ENCODE measurements at regions of chr4 and their contacts with region 1.

Region 1: GRCh38 chr4:15996773-15997172 is 33.8 kb upstream of the FGFBP2 start:
- DNase-seq: no peak
- H3K4me3 ChIP-seq: no peak overlapping the region
- H3K27ac ChIP-seq: no peak overlapping the region
- H3K4me1 ChIP-seq: peaks cover 0 to 7% (median 5%) of the 10 kb centered on the region in 4 donors
- H3K27me3 ChIP-seq: no peaks in the 10 kb centered on the region
- CTCF ChIP-seq: no peak
- EP300 ChIP-seq: no peak
- POLR2A ChIP-seq: no peak

Region 2: DNA sequence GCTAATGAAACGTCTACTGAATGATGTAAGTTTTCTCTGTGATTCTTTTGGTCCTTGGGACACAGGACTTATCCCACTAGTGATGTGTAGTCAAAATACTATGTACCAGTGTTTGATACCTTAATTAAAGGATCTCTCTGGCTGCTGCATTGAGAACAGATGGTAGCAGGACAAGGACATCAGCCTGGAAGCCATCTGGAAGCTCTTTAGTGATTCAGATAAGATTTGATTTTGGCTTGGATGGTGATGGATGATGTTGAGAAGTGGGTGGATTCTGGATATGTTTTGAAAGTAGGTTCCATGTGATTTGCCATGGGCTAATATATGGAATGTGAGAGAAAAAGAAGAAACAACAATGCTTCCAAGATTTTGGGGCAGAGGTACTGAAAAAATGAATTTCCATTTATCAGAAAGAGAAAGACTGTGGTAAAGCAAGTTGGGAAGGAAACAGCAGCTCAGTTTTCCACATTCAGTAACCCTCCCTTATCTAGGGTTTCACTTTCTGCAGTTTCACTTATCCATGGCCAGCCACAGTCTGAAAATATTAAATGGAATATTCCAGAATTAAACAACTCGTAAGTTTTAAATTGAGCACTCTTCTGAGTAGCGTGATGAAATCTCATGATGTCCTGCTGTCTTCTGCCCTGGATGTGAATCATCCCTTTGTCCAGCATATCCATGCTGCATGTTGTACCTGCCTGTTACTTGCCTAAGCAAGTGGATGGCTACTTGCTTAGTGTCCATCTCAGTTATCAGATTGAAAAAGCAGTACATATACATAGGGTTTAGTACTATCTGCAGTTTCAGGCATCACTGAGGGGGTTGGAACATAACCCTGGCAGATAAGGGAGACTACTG is 203.0 kb before region 1 on chr4:
- in situ Hi-C with region 1: no loop called
- intact Hi-C with region 1: no loop called
- DNase-seq: no peak
- H3K4me3 ChIP-seq: no peak overlapping the region
- H3K27ac ChIP-seq: no peak overlapping the region
- H3K4me1 ChIP-seq: peaks cover 0 to 3% (median under 1%) of the 10 kb centered on the region in 4 donors
- H3K27me3 ChIP-seq: no peaks in the 10 kb centered on the region
- CTCF ChIP-seq: no peak
- EP300 ChIP-seq: no peak
- POLR2A ChIP-seq: no peak

Region 3: GRCh38 chr4:15805583-15806517 is 190.9 kb before region 1 on chr4:
- in situ Hi-C with region 1: loop called in 1 of 4 experiments (anchors 10 kb)
- intact Hi-C with region 1: no loop called
- DNase-seq: no peak
- H3K4me3 ChIP-seq: no peak overlapping the region
- H3K27ac ChIP-seq: no peak overlapping the region
- H3K4me1 ChIP-seq: peaks cover 0 to 6% (median 0%) of the 10 kb centered on the region in 4 donors
- H3K27me3 ChIP-seq: no peaks in the 10 kb centered on the region
- CTCF ChIP-seq: peak; percentile 68 to 73 (median 69)
- EP300 ChIP-seq: no peak
- POLR2A ChIP-seq: no peak

Region 4: GRCh38 chr4:15882675-15883086 is 114.1 kb before region 1 on chr4:
- in situ Hi-C with region 1: no loop called
- intact Hi-C with region 1: loop called (anchors 5 kb)
- DNase-seq: peak; percentile 33
- H3K4me3 ChIP-seq: no peak overlapping the region
- H3K27ac ChIP-seq: no peak overlapping the region
- H3K4me1 ChIP-seq: peaks cover 3 to 18% (median 12%) of the 10 kb centered on the region in 4 donors
- H3K27me3 ChIP-seq: no peaks in the 10 kb centered on the region
- CTCF ChIP-seq: peak; percentile 85 to 94 (median 88)
- EP300 ChIP-seq: no peak
- POLR2A ChIP-seq: no peak

Region 5: GRCh38 chr4:16034010-16034829 is 37.4 kb after region 1 on chr4:
- in situ Hi-C with region 1: no loop called
- intact Hi-C with region 1: no loop called
- DNase-seq: no peak
- H3K4me3 ChIP-seq: no peak overlapping the region
- H3K27ac ChIP-seq: no peak overlapping the region
- H3K4me1 ChIP-seq: no peaks in the 10 kb centered on the region
- H3K27me3 ChIP-seq: no peaks in the 10 kb centered on the region
- CTCF ChIP-seq: no peak
- EP300 ChIP-seq: no peak
- POLR2A ChIP-seq: no peak

Region 6: GRCh38 chr4:16056681-16057385 is 60.1 kb after region 1 on chr4:
- in situ Hi-C with region 1: no loop called
- intact Hi-C with region 1: no loop called
- DNase-seq: no peak
- H3K4me3 ChIP-seq: no peak overlapping the region
- H3K27ac ChIP-seq: peak overlapping the region in 3 of 4 donors; percentile 28 to 64 (median 46)
- H3K4me1 ChIP-seq: peaks cover 0 to 11% (median 1%) of the 10 kb centered on the region in 4 donors
- H3K27me3 ChIP-seq: no peaks in the 10 kb centered on the region
- CTCF ChIP-seq: no peak
- EP300 ChIP-seq: no peak
- POLR2A ChIP-seq: no peak

Region 7: GRCh38 chr4:16264798-16265197 is 268.0 kb after region 1 on chr4:
- in situ Hi-C with region 1: no loop called
- intact Hi-C with region 1: no loop called
- DNase-seq: no peak
- H3K4me3 ChIP-seq: no peak overlapping the region
- H3K27ac ChIP-seq: no peak overlapping the region
- H3K4me1 ChIP-seq: no peaks in the 10 kb centered on the region
- H3K27me3 ChIP-seq: no peaks in the 10 kb centered on the region
- CTCF ChIP-seq: peak; percentile 36 to 49 (median 46)
- EP300 ChIP-seq: no peak
- POLR2A ChIP-seq: no peak